Endothelial cell of umbilical vein (primary cell): ENCODE measurements at regions of chr6 and their contacts with region 1.

Region 1: GRCh38 chr6:43774776-43775534 is 4.9 kb downstream of the VEGFA start:
- DNase-seq: peak; percentile 55
- H3K4me3 ChIP-seq: peak overlapping the region in 1 of 3 experiments; percentile 8
- H3K27ac ChIP-seq: no peak overlapping the region
- H3K4me1 ChIP-seq: peaks cover 19% of the 10 kb centered on the region
- H3K27me3 ChIP-seq: no peaks in the 10 kb centered on the region
- CTCF ChIP-seq: peak; percentile 80 to 92
- POLR2A ChIP-seq: no peak

Region 2: GRCh38 chr6:43786664-43787329 is 11.8 kb after region 1 on chr6:
- CTCF ChIA-PET with region 1: interaction called, 10 read pairs
- POLR2A ChIA-PET with region 1: no interaction called
- dilution Hi-C with region 1: no loop called
- intact Hi-C with region 1: no loop called
- DNase-seq: no peak
- H3K4me3 ChIP-seq: no peak overlapping the region
- H3K27ac ChIP-seq: no peak overlapping the region
- H3K4me1 ChIP-seq: no peaks in the 10 kb centered on the region
- H3K27me3 ChIP-seq: peaks cover 0 to 1% of the 10 kb centered on the region in 2 experiments
- CTCF ChIP-seq: no peak
- POLR2A ChIP-seq: no peak

Region 3: GRCh38 chr6:43951063-43951755 is 176.3 kb after region 1 on chr6:
- CTCF ChIA-PET with region 1: interaction called, 13 read pairs
- POLR2A ChIA-PET with region 1: no interaction called
- dilution Hi-C with region 1: no loop called
- intact Hi-C with region 1: no loop called
- DNase-seq: no peak
- H3K4me3 ChIP-seq: no peak overlapping the region
- H3K27ac ChIP-seq: no peak overlapping the region
- H3K4me1 ChIP-seq: no peaks in the 10 kb centered on the region
- H3K27me3 ChIP-seq: peaks cover 4 to 7% of the 10 kb centered on the region in 2 experiments
- CTCF ChIP-seq: peak; percentile 8 to 29
- POLR2A ChIP-seq: no peak